Mammary epithelial cell (primary cell): ENCODE measurements at regions of chr3 and their contacts with region 1.

Region 1: GRCh38 chr3:42129014-42129953 is 38.1 kb downstream of the TRAK1 start:
- DNase-seq: peak; percentile 72
- H3K4me3 ChIP-seq: no peak overlapping the region
- H3K27ac ChIP-seq: peak overlapping the region; percentile 91
- H3K4me1 ChIP-seq: peaks cover 22% of the 10 kb centered on the region
- H3K27me3 ChIP-seq: no peaks in the 10 kb centered on the region
- CTCF ChIP-seq: no peak

Region 2: GRCh38 chr3:42090973-42091731 is 38.1 kb before region 1 on chr3 and contains the start of gene TRAK1:
- CTCF ChIA-PET with region 1: no interaction called
- dilution Hi-C with region 1: no loop called
- in situ Hi-C with region 1: no loop called
- intact Hi-C with region 1: no loop called
- DNase-seq: peak; percentile 95
- H3K4me3 ChIP-seq: peak within 1 kb of the TSS; percentile 37 to 58 (median 54)
- H3K27ac ChIP-seq: peak within 1 kb of the TSS; percentile 79
- H3K4me1 ChIP-seq: peaks cover 17% of the 10 kb centered on the region
- H3K27me3 ChIP-seq: no peaks in the 10 kb centered on the region
- CTCF ChIP-seq: peak in 1 of 2 donors; percentile 20
- total RNA-seq, gene TRAK1: 64.5 to 67.2 TPM

Region 3: DNA sequence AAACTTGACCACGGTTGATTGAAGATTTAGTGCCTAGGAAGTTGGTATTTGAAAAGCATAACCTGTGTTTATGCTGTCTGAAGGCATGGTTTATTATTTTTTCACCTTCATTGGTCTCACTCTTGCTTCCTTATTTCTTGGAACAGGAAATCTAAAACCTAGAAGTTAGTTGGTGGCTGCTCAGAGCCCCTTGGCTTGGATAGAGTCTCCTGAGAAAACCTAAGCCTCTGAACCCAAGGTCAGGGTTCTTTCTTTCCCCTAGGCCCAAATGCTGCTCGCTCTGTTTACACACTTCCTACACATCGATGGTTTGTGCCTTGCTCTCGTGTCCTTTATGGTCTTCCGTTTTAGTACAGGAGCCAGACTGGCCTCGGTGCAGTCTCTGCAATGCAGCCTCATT is 44.0 kb after region 1 on chr3:
- CTCF ChIA-PET with region 1: no interaction called
- dilution Hi-C with region 1: loop called (anchors 5 kb)
- in situ Hi-C with region 1: no loop called
- intact Hi-C with region 1: loop called (anchors 2 kb)
- DNase-seq: no peak
- H3K4me3 ChIP-seq: no peak overlapping the region
- H3K27ac ChIP-seq: no peak overlapping the region
- H3K4me1 ChIP-seq: peaks cover 3% of the 10 kb centered on the region
- H3K27me3 ChIP-seq: no peaks in the 10 kb centered on the region
- CTCF ChIP-seq: no peak

Region 4: DNA sequence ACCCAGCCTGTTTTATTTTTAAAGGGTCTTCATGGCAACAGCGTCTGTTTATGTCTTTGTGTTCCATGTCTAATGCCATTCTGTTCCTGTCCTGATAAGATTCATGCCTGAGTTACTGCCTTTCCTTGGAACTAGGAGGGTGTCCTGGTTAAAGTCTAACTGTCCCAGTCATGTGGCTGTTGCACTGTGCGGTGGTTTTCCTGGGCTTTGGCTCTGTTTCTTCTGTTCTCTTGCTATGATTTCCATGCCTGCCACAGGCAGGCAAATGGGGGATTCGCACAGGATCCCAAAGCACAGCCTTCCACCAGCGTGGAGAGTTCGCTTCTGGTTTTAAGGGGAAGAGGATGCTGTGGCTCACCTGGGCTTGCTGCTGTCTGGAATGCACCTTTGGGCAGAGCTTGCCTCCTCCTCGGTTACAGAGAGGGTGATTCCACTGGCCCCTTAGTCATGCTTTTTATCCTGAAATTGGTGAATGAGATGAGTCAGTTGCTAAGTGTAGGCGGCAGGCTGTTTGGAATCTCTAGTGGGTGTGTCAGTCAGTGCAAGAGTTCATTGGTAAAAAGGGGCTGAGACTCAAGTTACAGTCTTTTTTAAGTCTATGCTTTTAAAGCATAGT is 49.9 kb after region 1 on chr3:
- CTCF ChIA-PET with region 1: no interaction called
- dilution Hi-C with region 1: loop called (anchors 5 kb)
- in situ Hi-C with region 1: loop called in 1 of 2 experiments (anchors 10 kb)
- intact Hi-C with region 1: loop called (anchors 2 kb)
- DNase-seq: peak; percentile 97
- H3K4me3 ChIP-seq: no peak overlapping the region
- H3K27ac ChIP-seq: peak overlapping the region; percentile 89
- H3K4me1 ChIP-seq: peaks cover 52% of the 10 kb centered on the region
- H3K27me3 ChIP-seq: no peaks in the 10 kb centered on the region
- CTCF ChIP-seq: no peak

Region 5: GRCh38 chr3:42300013-42300412 is 170.7 kb after region 1 on chr3:
- CTCF ChIA-PET with region 1: no interaction called
- dilution Hi-C with region 1: no loop called
- in situ Hi-C with region 1: no loop called
- intact Hi-C with region 1: no loop called
- DNase-seq: peak; percentile 39
- H3K4me3 ChIP-seq: no peak overlapping the region
- H3K27ac ChIP-seq: no peak overlapping the region
- H3K4me1 ChIP-seq: no peaks in the 10 kb centered on the region
- H3K27me3 ChIP-seq: no peaks in the 10 kb centered on the region
- CTCF ChIP-seq: no peak